PC-3 (cell line): ENCODE measurements at regions of chr7 and their contacts with region 1.

Region 1: DNA sequence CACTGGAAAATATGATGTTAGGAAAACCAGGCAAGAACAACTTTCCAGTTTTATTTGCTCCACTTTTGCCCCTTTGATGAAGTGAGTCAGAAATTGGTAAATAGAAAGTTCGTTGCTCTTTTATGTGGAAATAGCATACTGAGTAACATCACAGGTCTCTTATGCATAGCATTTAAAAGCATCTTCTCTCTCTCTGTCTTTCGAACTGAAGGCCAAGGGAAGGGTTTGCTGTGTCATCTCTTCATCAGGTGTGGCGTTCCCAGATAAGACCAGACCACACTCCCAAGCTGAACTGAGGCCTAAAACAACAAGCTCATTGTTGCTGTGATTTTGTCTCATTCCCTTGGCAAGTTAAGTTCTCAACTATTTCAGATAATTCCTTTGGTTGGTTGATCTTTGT is 131.8 kb upstream of the GRB10 start:
- DNase-seq: peak; percentile 73
- ATAC-seq: peak; percentile 88
- H3K4me3 ChIP-seq: no peak overlapping the region
- H3K27ac ChIP-seq: peak overlapping the region; percentile 84
- H3K4me1 ChIP-seq: peaks cover 22% of the 10 kb centered on the region
- H3K27me3 ChIP-seq: no peaks in the 10 kb centered on the region
- CTCF ChIP-seq: no peak

Region 2: DNA sequence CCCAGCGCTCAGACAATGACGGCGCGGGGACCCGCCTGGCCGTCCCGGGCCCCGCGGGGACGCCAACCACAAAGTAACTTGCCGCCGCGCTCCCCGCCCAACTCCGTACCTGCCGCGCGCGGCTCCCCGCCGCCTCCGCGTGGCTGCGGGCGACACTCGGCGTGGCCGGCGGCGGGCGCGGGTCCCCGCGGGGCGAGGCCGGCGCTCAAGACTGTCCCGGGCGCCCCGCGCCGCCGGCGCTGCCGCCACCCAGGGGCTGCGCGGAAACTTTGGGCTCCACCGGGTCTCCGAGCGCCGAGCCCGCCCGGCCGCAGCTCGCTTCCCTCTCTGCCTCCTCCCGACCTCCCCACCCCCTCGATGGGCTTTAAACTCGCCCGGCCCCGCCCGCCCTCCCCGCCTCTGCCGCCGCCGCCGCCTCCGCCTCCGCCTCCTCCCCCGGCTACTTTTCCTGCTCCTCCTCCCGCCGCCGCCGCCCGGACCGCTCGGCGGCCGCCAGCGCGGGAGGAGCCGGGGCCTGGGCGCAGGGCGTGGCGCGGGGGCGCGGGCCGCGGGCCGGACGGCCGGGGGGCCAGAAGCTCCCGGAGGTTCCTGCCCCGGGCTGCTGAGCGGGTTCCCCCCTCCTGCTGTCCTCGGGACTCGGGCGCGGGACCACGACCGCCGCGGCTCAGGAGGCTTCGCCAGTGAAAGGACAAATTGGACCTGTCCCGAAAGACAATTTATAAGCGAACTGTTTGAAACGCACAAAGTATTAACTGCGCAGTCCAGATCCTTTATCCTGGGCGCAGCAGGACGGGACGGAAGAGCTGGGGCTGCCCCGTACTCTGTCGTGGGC is 121.1 kb before region 1 on chr7:
- CTCF ChIA-PET with region 1: no interaction called
- POLR2A ChIA-PET with region 1: no interaction called
- intact Hi-C with region 1: loop called (anchors 5 kb)
- DNase-seq: peak; percentile 61
- ATAC-seq: peak; percentile 67
- H3K4me3 ChIP-seq: peak overlapping the region; percentile 65
- H3K27ac ChIP-seq: peak overlapping the region; percentile 36; the same call in 1 of the 2 replicates
- H3K4me1 ChIP-seq: peaks cover 15% of the 10 kb centered on the region
- H3K27me3 ChIP-seq: no peaks in the 10 kb centered on the region
- CTCF ChIP-seq: no peak

Region 3: GRCh38 chr7:50812841-50813475 is 101.5 kb before region 1 on chr7:
- CTCF ChIA-PET with region 1: no interaction called
- POLR2A ChIA-PET with region 1: no interaction called
- intact Hi-C with region 1: no loop called
- DNase-seq: peak; percentile 90
- ATAC-seq: peak; percentile 98
- H3K4me3 ChIP-seq: no peak overlapping the region
- H3K27ac ChIP-seq: peak overlapping the region; percentile 13; the same call in 1 of the 2 replicates
- H3K4me1 ChIP-seq: peaks cover 14% of the 10 kb centered on the region
- H3K27me3 ChIP-seq: no peaks in the 10 kb centered on the region
- CTCF ChIP-seq: no peak

Region 4: GRCh38 chr7:50838675-50839377 is 75.6 kb before region 1 on chr7:
- CTCF ChIA-PET with region 1: no interaction called
- POLR2A ChIA-PET with region 1: no interaction called
- intact Hi-C with region 1: loop called (anchors 5 kb)
- DNase-seq: peak; percentile 87
- ATAC-seq: peak; percentile 69
- H3K4me3 ChIP-seq: no peak overlapping the region
- H3K27ac ChIP-seq: peak overlapping the region; percentile 99
- H3K4me1 ChIP-seq: peaks cover 53% of the 10 kb centered on the region
- H3K27me3 ChIP-seq: no peaks in the 10 kb centered on the region
- CTCF ChIP-seq: no peak

Region 5: DNA sequence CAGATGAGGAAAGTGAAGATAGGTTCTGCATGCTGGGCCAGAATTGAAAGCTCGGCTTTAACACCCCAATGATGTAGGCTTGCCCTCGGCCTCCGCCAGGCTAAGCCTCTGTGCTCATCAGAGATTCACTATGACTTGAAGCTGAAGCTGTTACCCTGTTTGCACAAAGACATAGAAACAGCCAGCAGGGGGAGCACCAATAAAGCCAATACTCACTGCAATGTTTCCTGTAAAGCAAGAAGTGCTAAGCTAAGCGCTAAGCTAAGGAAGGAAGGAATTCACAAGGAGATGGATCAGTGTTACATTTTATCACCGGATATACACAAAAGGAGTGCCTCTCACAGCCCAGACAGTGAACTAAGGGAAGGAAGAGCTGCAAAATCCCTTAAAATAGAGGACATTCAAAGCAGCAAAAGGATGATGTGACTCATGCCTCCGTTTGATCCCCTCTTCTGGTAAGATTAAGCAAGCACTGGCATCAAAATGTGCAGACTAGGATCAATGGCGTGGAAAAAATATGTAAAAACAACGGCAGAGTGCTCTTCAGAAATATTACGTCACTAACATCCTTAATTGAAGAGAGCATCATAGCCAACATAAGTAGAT is 248.4 kb after region 1 on chr7:
- CTCF ChIA-PET with region 1: no interaction called
- POLR2A ChIA-PET with region 1: no interaction called
- intact Hi-C with region 1: no loop called
- DNase-seq: peak; percentile 90
- ATAC-seq: peak; percentile 96
- H3K4me3 ChIP-seq: no peak overlapping the region
- H3K27ac ChIP-seq: no peak overlapping the region
- H3K4me1 ChIP-seq: no peaks in the 10 kb centered on the region; the same call in 1 of the 2 replicates
- H3K27me3 ChIP-seq: no peaks in the 10 kb centered on the region
- CTCF ChIP-seq: peak; percentile 94